H1 (cell line): ENCODE measurements at regions of chr10 and their contacts with region 1.

Region 1: DNA sequence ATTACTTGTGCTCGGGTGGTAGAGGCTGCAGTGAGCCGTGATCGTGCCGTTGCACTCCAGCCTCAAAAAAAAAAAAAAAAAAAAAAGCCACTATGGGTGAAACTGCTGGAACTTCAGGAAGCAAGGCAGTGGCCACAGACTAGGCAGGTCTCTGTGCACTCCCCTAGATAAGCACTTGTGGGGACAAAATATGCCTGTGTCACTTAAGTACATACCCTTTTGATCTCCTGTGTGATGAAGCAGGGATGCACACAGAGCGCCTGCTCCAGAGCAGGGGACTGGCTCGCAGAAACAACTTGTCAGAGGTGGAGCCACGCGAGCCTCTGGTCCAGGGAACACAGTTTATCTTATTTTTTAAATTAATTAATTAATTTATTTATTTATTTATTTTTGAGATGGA is 42.9 kb upstream of the PSAP start:
- DNase-seq: no peak
- H3K4me3 ChIP-seq: no peak overlapping the region
- H3K27ac ChIP-seq: no peak overlapping the region
- H3K4me1 ChIP-seq: no peaks in the 10 kb centered on the region
- H3K27me3 ChIP-seq: peaks cover 4 to 16% (median 12%) of the 10 kb centered on the region in 4 experiments
- CTCF ChIP-seq: no peak
- EP300 ChIP-seq: no peak
- POLR2A ChIP-seq: no peak
- RAD21 ChIP-seq: no peak

Region 2: GRCh38 chr10:71589617-71590551 is 304.0 kb before region 1 on chr10:
- CTCF ChIA-PET with region 1: no interaction called
- POLR2A ChIA-PET with region 1: no interaction called
- DNase-seq: no peak
- H3K4me3 ChIP-seq: no peak overlapping the region
- H3K27ac ChIP-seq: no peak overlapping the region
- H3K4me1 ChIP-seq: no peaks in the 10 kb centered on the region
- H3K27me3 ChIP-seq: no peaks in the 10 kb centered on the region
- CTCF ChIP-seq: no peak
- EP300 ChIP-seq: no peak
- POLR2A ChIP-seq: no peak
- RAD21 ChIP-seq: no peak

Region 3: GRCh38 chr10:71835671-71836595 is 58.0 kb before region 1 on chr10:
- CTCF ChIA-PET with region 1: interaction called, 113 read pairs
- POLR2A ChIA-PET with region 1: no interaction called
- DNase-seq: no peak
- H3K4me3 ChIP-seq: no peak overlapping the region
- H3K27ac ChIP-seq: peak overlapping the region; percentile 43; the same call in 1 of the 2 replicates
- H3K4me1 ChIP-seq: peaks cover 10 to 27% (median 11%) of the 10 kb centered on the region in 4 experiments
- H3K27me3 ChIP-seq: no peaks in the 10 kb centered on the region
- CTCF ChIP-seq: no peak
- EP300 ChIP-seq: no peak
- POLR2A ChIP-seq: no peak
- RAD21 ChIP-seq: no peak

Region 4: GRCh38 chr10:71880425-71881306 is 13.3 kb before region 1 on chr10:
- CTCF ChIA-PET with region 1: interaction called, 13 read pairs
- POLR2A ChIA-PET with region 1: no interaction called
- DNase-seq: no peak
- H3K4me3 ChIP-seq: no peak overlapping the region
- H3K27ac ChIP-seq: no peak overlapping the region
- H3K4me1 ChIP-seq: peaks cover 0 to 5% (median 0%) of the 10 kb centered on the region in 4 experiments; a peak in 3 of 7 replicates
- H3K27me3 ChIP-seq: no peaks in the 10 kb centered on the region
- CTCF ChIP-seq: no peak
- EP300 ChIP-seq: no peak
- POLR2A ChIP-seq: no peak
- RAD21 ChIP-seq: no peak

Region 5: GRCh38 chr10:72061491-72061890 is 167.6 kb after region 1 on chr10:
- CTCF ChIA-PET with region 1: interaction called, 16 read pairs
- POLR2A ChIA-PET with region 1: no interaction called
- DNase-seq: peak in 1 of 2 experiments; percentile 71
- H3K4me3 ChIP-seq: no peak overlapping the region
- H3K27ac ChIP-seq: no peak overlapping the region
- H3K4me1 ChIP-seq: peaks cover 0 to 9% (median 7%) of the 10 kb centered on the region in 4 experiments; a peak in 4 of 7 replicates
- H3K27me3 ChIP-seq: no peaks in the 10 kb centered on the region
- CTCF ChIP-seq: peak; percentile 70 to 76 (median 71)
- EP300 ChIP-seq: no peak
- POLR2A ChIP-seq: no peak
- RAD21 ChIP-seq: peak; percentile 64 to 74